ENCODE measurements at regions of chr11 and their contacts with region 1.

Region 1: DNA sequence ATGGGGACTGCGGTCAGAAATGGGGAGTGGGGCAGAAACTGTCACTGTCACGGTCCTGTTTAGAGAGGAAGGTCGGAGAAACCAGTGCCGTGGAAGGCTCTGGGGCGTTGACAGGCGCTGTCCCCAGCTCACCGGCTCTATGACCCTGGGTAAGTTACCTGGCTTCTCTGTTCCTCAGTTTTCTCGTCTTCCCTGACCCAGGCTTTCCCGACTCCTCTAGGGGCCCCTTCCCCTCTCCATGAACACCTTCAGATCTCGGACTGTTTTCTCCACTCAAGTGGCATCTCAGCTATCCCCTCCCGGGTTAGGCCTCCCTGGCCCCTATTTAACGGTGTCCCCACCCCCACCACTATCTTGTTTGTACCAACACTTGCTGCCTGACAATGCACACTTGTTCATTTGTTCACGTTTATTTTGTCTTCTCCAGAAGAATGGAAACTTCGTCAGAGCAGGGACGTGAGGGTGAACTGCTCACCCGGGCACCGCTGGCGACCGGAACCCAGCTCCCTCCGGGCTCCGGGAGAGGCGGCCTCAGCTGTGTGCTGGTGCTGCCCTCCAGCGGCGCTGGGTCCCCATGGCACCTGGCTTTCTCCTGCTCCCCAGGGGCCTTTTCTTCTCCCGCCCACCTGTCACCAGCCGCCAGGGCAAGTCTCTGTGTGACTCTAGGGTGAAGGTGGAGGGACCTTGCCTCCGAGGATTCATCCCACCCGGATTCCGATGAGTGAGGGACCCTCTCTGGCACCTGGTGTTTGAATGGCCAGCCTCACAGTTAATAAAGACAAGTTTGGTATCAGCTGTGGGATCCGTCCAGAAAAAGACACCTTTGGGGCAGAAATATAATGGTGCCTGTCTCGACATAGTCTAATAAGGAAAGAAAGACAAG is 33.1 kb upstream of the SLC35C1 start:
- DNase-seq: peak; percentile 56
- ATAC-seq: peak; percentile 94
- H3K4me3 ChIP-seq: peak overlapping the region; percentile 41 to 63
- H3K27ac ChIP-seq: no peak overlapping the region
- H3K4me1 ChIP-seq: peaks cover 0 to 7% of the 10 kb centered on the region in 2 experiments; a peak in 1 of 4 replicates
- H3K27me3 ChIP-seq: no peaks in the 10 kb centered on the region; the same call in 1 of the 2 replicates
- CTCF ChIP-seq: peak; percentile 88 to 95 (median 93)
- POLR2A ChIP-seq: peak; percentile 21
- RAD21 ChIP-seq: peak; percentile 93

Region 2: GRCh38 chr11:45110562-45110961 is 661.2 kb before region 1 on chr11:
- CTCF ChIA-PET with region 1: interaction called, 21 read pairs
- POLR2A ChIA-PET with region 1: no interaction called
- RAD21 ChIA-PET with region 1: interaction called in 1 of 2 experiments, 3 read pairs
- intact Hi-C with region 1: loop called (anchors 1 kb)
- DNase-seq: peak; percentile 64
- ATAC-seq: peak; percentile 90
- H3K4me3 ChIP-seq: no peak overlapping the region
- H3K27ac ChIP-seq: no peak overlapping the region
- H3K4me1 ChIP-seq: peaks cover 0 to 14% of the 10 kb centered on the region in 2 experiments; a peak in 2 of 4 replicates
- H3K27me3 ChIP-seq: no peaks in the 10 kb centered on the region
- CTCF ChIP-seq: peak; percentile 59 to 91 (median 76); a peak in 5 of 6 replicates
- POLR2A ChIP-seq: no peak
- RAD21 ChIP-seq: peak; percentile 92

Region 3: DNA sequence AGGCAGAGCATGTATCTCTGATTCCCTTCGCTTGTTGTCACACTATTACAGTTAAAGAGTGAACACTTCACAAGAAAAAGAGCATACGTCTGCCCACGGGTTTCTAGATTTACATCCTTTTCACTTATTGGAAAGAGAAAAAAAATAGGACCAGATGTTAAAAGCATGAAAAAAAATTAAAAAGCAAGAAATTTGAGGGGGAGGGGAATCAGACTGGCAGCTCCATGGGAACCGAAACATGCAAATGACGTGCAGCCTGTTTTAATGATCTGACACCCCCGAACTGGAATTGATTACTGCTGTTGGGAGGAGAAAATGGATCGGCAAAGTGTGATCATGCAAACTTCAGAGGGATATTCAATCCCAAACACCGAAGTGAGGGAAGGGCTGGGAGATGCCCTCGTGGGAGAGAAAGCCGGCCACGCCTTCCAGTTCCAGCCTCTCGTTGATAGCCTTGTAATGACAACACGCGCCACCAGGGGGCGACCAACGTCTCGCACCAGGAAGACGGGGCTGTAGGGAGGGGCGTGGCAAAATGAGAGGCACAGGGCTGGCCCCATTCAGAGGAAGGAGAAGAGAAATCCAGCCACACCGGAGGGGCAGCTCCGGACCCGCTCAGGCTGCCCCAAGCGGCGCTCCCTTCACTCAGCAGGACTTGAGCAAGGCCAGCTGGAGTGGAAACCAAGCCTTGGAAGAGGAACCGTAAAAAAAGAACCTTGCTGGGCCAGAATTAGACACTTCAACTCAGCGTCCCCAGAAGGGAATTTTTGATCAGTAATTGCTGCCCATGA is 431.9 kb before region 1 on chr11:
- CTCF ChIA-PET with region 1: interaction called, 81 read pairs
- POLR2A ChIA-PET with region 1: interaction called, 4 read pairs
- RAD21 ChIA-PET with region 1: interaction called, 5 to 8 read pairs
- intact Hi-C with region 1: loop called (anchors 1 kb)
- DNase-seq: peak; percentile 89
- ATAC-seq: peak; percentile 99
- H3K4me3 ChIP-seq: peak overlapping the region; percentile 3 to 44; a peak in 1 of 4 replicates
- H3K27ac ChIP-seq: no peak overlapping the region
- H3K4me1 ChIP-seq: peaks cover 13 to 19% of the 10 kb centered on the region in 2 experiments; a peak in 3 of 4 replicates
- H3K27me3 ChIP-seq: peaks cover 18% of the 10 kb centered on the region
- CTCF ChIP-seq: peak; percentile 69 to 87 (median 87); a peak in 5 of 6 replicates
- POLR2A ChIP-seq: no peak
- RAD21 ChIP-seq: peak; percentile 74

Region 4: DNA sequence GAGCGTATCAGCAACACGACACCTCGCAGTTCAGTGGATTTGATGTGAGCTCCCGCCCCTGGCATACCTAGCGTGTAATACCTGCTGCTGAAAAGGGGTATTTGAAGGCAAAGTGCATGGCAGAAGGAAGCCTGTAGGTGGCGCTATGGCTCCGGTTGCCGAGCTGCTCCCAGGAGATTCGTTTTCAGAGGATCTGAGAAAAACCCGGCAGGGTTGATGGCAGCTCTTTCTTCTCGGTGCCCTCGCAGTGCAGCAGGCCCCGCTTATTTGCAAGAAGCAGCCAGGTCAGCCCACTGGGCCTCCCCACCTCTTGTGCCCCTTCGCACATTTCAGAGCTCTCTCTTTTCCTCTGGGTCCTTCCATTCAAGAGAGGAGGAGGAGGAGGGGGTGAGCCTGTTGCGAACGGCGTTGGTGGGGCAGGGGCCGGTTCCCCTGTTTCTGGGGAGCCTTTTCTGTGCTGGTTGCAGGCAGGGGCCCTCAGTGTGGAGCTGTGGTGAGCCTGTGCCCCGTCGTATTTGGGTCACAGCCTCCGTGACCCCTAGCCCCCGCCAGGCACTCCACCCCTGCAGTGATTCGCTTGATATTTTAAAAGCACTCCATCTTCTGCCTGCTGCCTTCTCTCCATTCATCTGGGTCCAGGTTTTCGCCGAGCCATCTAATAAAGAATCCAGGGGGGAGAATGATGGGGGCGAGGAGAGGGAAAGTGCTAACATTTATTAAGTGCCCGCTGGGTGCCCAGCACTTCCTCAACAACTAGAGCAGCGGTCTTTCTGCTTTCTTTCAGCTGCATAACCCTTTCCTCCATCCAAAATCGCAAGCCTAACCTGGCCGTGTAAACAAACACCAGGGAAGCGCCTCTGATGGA is 400.3 kb before region 1 on chr11:
- CTCF ChIA-PET with region 1: interaction called, 124 read pairs
- POLR2A ChIA-PET with region 1: interaction called, 3 read pairs
- RAD21 ChIA-PET with region 1: interaction called, 12 to 20 read pairs
- intact Hi-C with region 1: loop called (anchors 1 kb)
- DNase-seq: peak; percentile 63
- ATAC-seq: peak; percentile 97
- H3K4me3 ChIP-seq: no peak overlapping the region
- H3K27ac ChIP-seq: no peak overlapping the region
- H3K4me1 ChIP-seq: peaks cover 4 to 5% of the 10 kb centered on the region in 2 experiments; a peak in 2 of 4 replicates
- H3K27me3 ChIP-seq: peaks cover 15% of the 10 kb centered on the region; the same call in 1 of the 2 replicates
- CTCF ChIP-seq: peak; percentile 81 to 97 (median 96)
- POLR2A ChIP-seq: no peak
- RAD21 ChIP-seq: peak; percentile 92

Region 5: GRCh38 chr11:45405916-45406670 is 365.7 kb before region 1 on chr11:
- CTCF ChIA-PET with region 1: interaction called, 13 read pairs
- POLR2A ChIA-PET with region 1: no interaction called
- RAD21 ChIA-PET with region 1: no interaction called
- intact Hi-C with region 1: loop called (anchors 2 kb)
- DNase-seq: no peak
- ATAC-seq: 0 out of 2 replicates have a peak, but pooled peaks have one; percentile 44
- H3K4me3 ChIP-seq: no peak overlapping the region
- H3K27ac ChIP-seq: no peak overlapping the region
- H3K4me1 ChIP-seq: no peaks in the 10 kb centered on the region
- H3K27me3 ChIP-seq: peaks cover 56% of the 10 kb centered on the region
- CTCF ChIP-seq: peak; percentile 32 to 58 (median 55); a peak in 5 of 6 replicates
- POLR2A ChIP-seq: no peak
- RAD21 ChIP-seq: peak; percentile 42; the same call in 1 of the 2 replicates

Region 6: GRCh38 chr11:45583981-45584566 is 187.7 kb before region 1 on chr11:
- CTCF ChIA-PET with region 1: no interaction called
- POLR2A ChIA-PET with region 1: no interaction called
- RAD21 ChIA-PET with region 1: no interaction called
- intact Hi-C with region 1: no loop called
- DNase-seq: no peak
- ATAC-seq: no peak
- H3K4me3 ChIP-seq: no peak overlapping the region
- H3K27ac ChIP-seq: no peak overlapping the region
- H3K4me1 ChIP-seq: no peaks in the 10 kb centered on the region
- H3K27me3 ChIP-seq: peaks cover 66% of the 10 kb centered on the region
- CTCF ChIP-seq: no peak
- POLR2A ChIP-seq: no peak
- RAD21 ChIP-seq: no peak

Region 7: GRCh38 chr11:45677770-45678512 is 93.9 kb before region 1 on chr11:
- CTCF ChIA-PET with region 1: no interaction called
- POLR2A ChIA-PET with region 1: no interaction called
- RAD21 ChIA-PET with region 1: no interaction called
- intact Hi-C with region 1: no loop called
- DNase-seq: no peak
- ATAC-seq: no peak
- H3K4me3 ChIP-seq: no peak overlapping the region
- H3K27ac ChIP-seq: no peak overlapping the region
- H3K4me1 ChIP-seq: no peaks in the 10 kb centered on the region
- H3K27me3 ChIP-seq: no peaks in the 10 kb centered on the region
- CTCF ChIP-seq: no peak
- POLR2A ChIP-seq: no peak
- RAD21 ChIP-seq: no peak

Region 8: GRCh38 chr11:45754261-45754709 is 17.5 kb before region 1 on chr11:
- CTCF ChIA-PET with region 1: interaction called, 14 read pairs
- POLR2A ChIA-PET with region 1: no interaction called
- RAD21 ChIA-PET with region 1: no interaction called
- intact Hi-C with region 1: no loop called
- DNase-seq: no peak
- ATAC-seq: no peak
- H3K4me3 ChIP-seq: no peak overlapping the region
- H3K27ac ChIP-seq: no peak overlapping the region
- H3K4me1 ChIP-seq: no peaks in the 10 kb centered on the region
- H3K27me3 ChIP-seq: peaks cover 22% of the 10 kb centered on the region
- CTCF ChIP-seq: no peak
- POLR2A ChIP-seq: no peak
- RAD21 ChIP-seq: no peak

Measured in HCT116 (cell line).